ENCODE measurements at regions of chr1 and their contacts with region 1.

Region 1: GRCh38 chr1:165597883-165598675 is 33.0 kb upstream of the MGST3 start:
- H3K4me3 ChIP-seq: peak overlapping the region; percentile 60
- H3K27ac ChIP-seq: no peak overlapping the region; the same call in 1 of the 2 replicates
- H3K4me1 ChIP-seq: no peaks in the 10 kb centered on the region
- CTCF ChIP-seq: no peak

Region 2: GRCh38 chr1:165257969-165258459 is 340.1 kb before region 1 on chr1:
- CTCF ChIA-PET with region 1: interaction called, 16 read pairs
- POLR2A ChIA-PET with region 1: no interaction called
- H3K4me3 ChIP-seq: no peak overlapping the region
- H3K27ac ChIP-seq: no peak overlapping the region
- H3K4me1 ChIP-seq: peaks cover 3% of the 10 kb centered on the region; the same call in 1 of the 2 replicates
- CTCF ChIP-seq: peak; percentile 64; the same call in 1 of the 2 replicates

Region 3: GRCh38 chr1:165403835-165404482 is 194.1 kb before region 1 on chr1:
- CTCF ChIA-PET with region 1: interaction called, 184 read pairs
- POLR2A ChIA-PET with region 1: no interaction called
- H3K4me3 ChIP-seq: no peak overlapping the region
- H3K27ac ChIP-seq: no peak overlapping the region
- H3K4me1 ChIP-seq: no peaks in the 10 kb centered on the region
- CTCF ChIP-seq: peak; percentile 87

Region 4: DNA sequence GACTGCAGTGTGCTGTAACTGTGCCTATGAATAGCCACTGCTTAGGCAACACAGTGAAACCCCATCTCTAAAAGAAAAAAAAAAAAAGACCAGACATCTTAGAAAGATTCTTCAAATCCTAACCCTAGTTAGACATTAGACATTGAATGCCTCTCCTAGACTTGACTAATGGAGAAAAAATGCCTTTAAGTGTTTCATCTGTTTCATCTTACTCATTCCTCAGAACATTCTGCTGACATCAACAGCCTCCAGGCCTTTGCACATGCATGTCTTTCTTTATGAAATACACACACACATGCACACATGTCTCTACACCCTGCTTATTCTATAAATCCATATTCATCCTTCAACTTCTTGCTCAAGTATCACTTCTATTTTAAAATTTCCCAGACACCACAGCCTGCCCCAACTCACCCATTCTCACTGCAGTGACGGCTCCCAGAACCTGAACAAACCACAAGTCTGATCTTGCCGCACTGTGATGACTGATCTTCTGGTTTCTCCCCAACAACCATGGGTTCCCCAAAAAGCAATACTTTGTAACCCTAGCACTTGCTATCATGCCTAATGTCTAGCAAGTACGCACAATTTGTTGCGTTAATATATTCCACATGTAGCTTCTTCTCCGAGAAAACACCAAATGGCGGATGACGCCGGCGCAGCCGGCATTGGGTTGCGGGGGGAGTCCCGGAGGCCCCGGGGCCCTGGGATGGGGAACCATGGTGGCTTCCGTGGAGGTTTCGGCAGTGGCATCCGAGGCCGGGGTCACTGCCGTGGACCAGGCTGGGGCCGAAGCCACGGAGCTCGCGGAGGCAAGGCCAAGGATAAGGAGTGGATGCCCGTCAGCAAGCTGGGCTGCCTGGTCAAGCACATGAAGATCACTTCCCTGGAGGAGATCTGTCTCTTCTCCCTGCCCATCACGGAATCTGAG is 16.9 kb before region 1 on chr1:
- CTCF ChIA-PET with region 1: interaction called, 13 read pairs
- POLR2A ChIA-PET with region 1: no interaction called
- H3K4me3 ChIP-seq: no peak overlapping the region
- H3K27ac ChIP-seq: no peak overlapping the region
- H3K4me1 ChIP-seq: no peaks in the 10 kb centered on the region
- CTCF ChIP-seq: no peak

Region 5: DNA sequence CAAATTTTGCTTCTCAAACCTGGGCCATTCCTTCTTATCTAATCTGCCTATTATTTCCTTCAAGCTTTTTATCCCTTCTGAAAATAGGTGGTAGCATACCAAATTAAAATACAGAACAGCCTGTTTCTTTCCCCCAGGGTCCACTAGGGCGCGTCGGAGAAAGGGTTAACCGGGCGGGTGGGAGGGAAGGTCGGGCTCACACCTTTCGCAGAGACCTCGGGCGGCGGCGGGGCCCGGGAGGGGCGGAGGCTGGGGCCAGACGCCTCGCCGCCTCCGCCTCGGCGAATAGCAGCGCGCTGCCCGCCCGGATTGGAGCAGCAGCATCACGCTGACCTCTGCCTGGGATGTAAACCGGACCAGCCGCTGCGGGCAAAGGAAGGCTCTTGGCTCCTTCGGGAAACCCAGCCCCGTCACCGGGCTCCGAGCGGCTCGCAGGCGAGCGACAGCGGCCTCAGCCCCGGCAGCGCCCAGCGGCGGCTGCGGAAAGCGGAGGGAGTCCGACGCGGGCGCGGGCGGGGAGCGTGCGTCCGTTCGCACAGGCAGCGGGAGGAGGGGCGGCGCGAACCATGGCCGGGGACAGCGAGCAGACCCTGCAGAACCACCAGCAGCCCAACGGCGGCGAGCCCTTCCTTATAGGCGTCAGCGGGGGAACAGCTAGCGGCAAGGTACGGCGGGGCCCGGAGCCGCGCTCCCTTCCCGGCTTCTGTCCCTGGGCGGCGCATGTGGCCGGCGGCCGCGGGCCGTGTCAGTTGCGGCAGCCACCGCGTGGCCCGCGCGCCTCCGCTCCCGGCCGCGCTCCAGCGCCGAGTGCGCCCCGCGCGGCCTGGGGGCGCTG is 229.4 kb after region 1 on chr1 and contains the start of gene UCK2:
- CTCF ChIA-PET with region 1: interaction called, 11 read pairs
- POLR2A ChIA-PET with region 1: interaction called, 3 read pairs
- H3K4me3 ChIP-seq: peak within 1 kb of the TSS; percentile 86
- H3K27ac ChIP-seq: peak within 1 kb of the TSS; percentile 83
- H3K4me1 ChIP-seq: no peaks in the 10 kb centered on the region
- CTCF ChIP-seq: peak; percentile 72

Region 6: DNA sequence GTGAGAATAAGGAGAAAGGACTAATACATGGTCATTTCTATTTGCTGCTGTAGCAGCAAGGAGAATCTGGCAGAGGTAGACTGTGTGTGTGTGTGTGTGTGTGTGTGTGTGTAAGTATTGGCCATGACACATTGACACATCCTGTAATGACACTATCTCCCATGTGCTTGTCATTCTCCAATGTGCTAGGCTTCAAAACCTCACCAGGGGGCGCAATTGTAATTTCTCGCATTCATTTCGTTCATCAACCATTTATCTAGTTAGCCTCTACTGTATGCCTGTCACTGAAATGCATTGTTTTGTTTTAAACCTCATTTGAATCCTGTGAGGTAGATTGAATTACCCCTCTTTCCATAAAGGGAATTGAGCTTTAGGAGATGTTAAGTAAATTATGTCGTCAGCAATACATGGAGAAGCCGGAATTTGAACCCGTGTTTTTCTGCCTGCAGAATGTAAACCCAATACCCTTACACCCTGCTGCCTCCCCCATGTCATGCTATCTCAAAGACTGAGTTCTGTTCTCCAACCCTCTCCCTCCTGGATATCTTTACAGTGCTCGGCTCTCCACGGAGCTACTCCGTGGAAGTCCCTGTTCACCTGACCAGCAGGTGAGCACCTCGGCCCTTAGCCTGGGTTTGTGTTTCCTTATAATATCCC is 330.1 kb after region 1 on chr1:
- CTCF ChIA-PET with region 1: interaction called, 12 read pairs
- POLR2A ChIA-PET with region 1: no interaction called
- H3K4me3 ChIP-seq: no peak overlapping the region
- H3K27ac ChIP-seq: no peak overlapping the region
- H3K4me1 ChIP-seq: no peaks in the 10 kb centered on the region
- CTCF ChIP-seq: peak; percentile 53